Motor neuron (in vitro differentiated cells): ENCODE measurements at regions of chr22 and their contacts with region 1.

Region 1: GRCh38 chr22:33209930-33210784 is 152.0 kb upstream of the SYN3 start:
- ATAC-seq: peak in 5 of 8 experiments; percentile 35 to 98 (median 86)
- H3K4me3 ChIP-seq: no peak overlapping the region
- H3K27ac ChIP-seq: no peak overlapping the region
- H3K4me1 ChIP-seq: no peaks in the 10 kb centered on the region

Region 2: GRCh38 chr22:33018232-33018864 is 191.8 kb before region 1 on chr22:
- in situ Hi-C with region 1: loop called in 4 of 9 experiments (anchors 10 to 25 kb)
- ATAC-seq: peak; percentile 64 to 94 (median 76)
- H3K4me3 ChIP-seq: no peak overlapping the region
- H3K27ac ChIP-seq: no peak overlapping the region
- H3K4me1 ChIP-seq: no peaks in the 10 kb centered on the region

Region 3: GRCh38 chr22:33674357-33674756 is 464.2 kb after region 1 on chr22:
- in situ Hi-C with region 1: no loop called
- ATAC-seq: no peak
- H3K4me3 ChIP-seq: no peak overlapping the region
- H3K27ac ChIP-seq: no peak overlapping the region
- H3K4me1 ChIP-seq: peaks cover 8 to 21% of the 10 kb centered on the region in 2 donors